Activated T-helper 2 cell treated with anti-CD3 and anti-CD28 coated beads, Interferon-gamma antibody, Interleukin-2, Interleukin-4, amounts not matched to agents 10 μg/mL and 5 μg/mL and 100 μg/mL, durations not matched to agents 14 hours and 24 hours and 36 hours (primary cell): ENCODE measurements at regions of chr16 and their contacts with region 1.

Region 1: DNA sequence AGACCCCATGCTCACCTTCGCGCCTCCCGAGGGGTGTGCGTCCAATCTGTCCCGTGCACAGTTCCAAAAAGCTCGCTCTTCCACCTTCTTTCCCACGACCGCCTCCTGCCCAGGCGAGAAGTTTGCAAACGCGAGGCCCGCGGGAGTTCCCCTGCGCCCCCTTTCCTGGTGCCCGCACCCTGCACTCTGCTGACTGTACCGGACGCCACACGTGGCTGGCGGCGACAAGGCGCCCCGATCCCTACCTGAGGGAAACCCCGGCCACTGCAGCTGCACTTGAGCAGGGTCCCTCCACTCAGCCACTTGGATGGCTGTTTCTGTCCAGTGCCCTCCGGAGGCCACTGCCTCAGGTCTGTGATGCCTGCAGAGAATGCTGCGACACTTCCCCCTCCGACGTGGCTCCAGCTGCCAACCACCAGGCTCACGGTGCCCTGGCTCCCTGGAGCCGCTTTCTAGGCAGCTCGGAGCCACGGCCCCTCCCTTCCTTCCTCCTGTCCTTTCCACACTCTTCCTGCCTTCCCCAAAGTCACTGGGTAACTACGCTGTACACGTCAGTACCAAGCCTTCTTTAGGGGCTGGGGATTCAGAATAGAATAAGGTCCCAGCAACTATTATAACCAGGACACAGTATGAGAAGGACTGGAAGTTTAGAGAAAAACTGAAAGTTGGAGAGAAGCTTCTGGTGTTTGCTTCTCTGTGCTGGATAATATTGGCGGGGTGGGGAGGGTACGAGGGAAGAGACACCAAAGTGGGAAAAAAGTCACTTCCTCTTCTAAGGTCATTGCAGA is at the start of gene MLKL:
- DNase-seq: peak; percentile 37
- H3K4me3 Mint-ChIP-seq: peak within 1 kb of the TSS; percentile 91
- H3K27ac Mint-ChIP-seq: peak within 1 kb of the TSS; percentile 91
- H3K4me1 Mint-ChIP-seq: peaks cover 52% of the 10 kb centered on the region
- H3K27me3 Mint-ChIP-seq: no peaks in the 10 kb centered on the region
- total RNA-seq, gene MLKL: 21.6 and 25.6 TPM in 2 replicates

Region 2: DNA sequence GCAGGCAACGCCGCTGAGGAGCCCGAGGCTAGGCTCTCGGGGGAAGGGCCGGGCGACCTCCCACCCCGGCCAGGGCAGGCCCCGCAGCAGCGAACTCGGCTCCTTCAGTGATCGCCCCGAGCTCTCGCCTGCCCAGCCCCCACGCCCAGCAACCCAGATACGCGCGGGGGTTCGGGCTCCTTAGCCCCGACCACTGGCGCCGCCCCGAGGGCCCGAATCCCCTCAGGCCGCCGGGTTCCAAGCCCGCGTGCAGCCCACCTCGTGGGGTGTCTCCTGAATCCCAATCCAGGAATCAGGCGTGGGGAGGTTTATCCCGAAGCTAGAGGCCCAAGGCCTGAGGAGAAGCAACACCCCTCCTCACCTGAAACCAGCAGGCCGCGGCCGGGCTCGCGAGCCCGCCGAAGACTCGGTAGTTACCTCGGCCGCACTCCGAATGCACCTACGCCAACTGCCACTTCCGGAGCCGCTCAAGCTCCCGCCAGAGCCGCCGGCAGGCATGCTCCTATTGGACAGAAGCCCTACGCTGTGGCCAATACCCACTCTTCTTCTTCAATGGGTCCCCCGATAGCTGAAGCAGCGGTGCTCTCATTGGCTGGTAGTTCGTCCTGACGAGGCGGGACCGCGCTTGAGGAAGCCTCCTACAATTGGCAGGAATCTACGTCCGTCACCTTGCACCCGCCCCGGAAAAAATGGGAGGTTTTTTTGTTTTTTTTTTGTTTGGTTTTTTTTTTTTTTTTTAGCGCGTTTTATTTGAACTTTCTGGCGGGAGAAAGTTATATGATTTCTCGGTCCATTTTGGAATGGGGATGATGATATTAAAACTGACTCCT is 34.0 kb before region 1 on chr16 and contains the start of gene RFWD3:
- intact Hi-C with region 1: loop called (anchors 1 kb)
- DNase-seq: peak; percentile 95
- H3K4me3 Mint-ChIP-seq: peak within 1 kb of the TSS; percentile 91
- H3K27ac Mint-ChIP-seq: peak within 1 kb of the TSS; percentile 86
- H3K4me1 Mint-ChIP-seq: peaks cover 37% of the 10 kb centered on the region
- H3K27me3 Mint-ChIP-seq: no peaks in the 10 kb centered on the region
- total RNA-seq, gene RFWD3: 94.5 and 101 TPM in 2 replicates

Region 3: DNA sequence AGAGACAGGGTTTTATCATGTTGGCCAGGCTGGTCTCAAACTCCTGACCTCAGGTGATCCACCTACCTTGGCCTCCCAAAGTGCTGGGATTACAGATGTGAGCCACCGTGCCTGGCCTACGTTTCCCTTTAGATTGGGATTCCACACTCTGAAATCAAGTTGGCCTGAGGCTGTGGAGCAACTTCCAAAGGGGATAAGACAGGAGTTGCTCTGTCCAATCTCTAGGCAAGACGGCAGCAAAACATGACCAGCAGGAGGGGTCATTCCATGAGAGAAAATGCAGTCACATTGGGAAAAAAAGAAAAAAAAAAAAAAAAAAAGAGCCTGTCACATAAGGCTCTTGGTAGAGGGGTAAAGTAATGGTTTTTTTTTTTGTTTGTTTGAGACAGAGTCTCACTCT is 16.5 kb before region 1 on chr16:
- intact Hi-C with region 1: no loop called
- DNase-seq: no peak
- H3K4me3 Mint-ChIP-seq: no peak overlapping the region
- H3K27ac Mint-ChIP-seq: no peak overlapping the region
- H3K4me1 Mint-ChIP-seq: peaks cover 3% of the 10 kb centered on the region
- H3K27me3 Mint-ChIP-seq: no peaks in the 10 kb centered on the region

Region 4: GRCh38 chr16:74726716-74727115 is 26.1 kb after region 1 on chr16:
- intact Hi-C with region 1: no loop called
- DNase-seq: no peak
- H3K4me3 Mint-ChIP-seq: no peak overlapping the region
- H3K27ac Mint-ChIP-seq: no peak overlapping the region
- H3K4me1 Mint-ChIP-seq: no peaks in the 10 kb centered on the region
- H3K27me3 Mint-ChIP-seq: no peaks in the 10 kb centered on the region

Region 5: DNA sequence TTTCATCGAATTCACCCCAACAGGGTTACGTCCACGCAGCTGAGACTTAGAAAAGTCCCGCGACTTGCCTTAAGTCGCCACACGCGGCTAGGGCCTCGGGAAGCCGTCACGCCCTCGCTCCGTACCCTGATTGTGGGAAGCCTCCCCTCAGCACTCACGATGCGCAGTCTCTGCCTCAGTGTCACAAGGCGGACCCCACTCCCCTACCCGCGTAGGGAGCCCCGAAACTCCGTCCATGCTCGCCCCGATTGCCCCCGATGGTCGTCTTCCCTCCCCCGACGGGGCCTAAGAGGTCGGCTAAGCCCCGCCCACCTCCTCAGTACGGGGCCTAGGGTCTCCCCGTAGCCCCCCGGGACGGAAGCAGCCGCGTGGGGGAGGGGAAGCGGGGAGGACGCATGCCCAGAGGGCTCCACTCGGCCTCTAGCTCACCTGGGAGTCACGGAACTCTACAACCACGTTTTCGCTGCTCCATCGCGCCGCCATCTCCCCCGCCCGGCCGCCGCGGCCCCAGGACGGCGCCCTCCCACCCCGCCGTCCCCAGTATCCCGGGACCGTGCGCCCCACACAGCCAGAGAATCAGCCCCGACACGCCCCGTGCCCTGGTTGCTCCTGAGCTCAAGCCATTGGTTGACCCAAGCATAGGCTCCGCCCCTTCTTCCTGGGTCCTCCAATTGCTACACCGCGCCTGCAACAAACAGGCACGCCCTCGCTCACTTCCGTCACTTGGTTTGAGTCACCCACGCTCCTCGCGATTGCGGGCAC is 284.1 kb after region 1 on chr16 and contains the start of gene WDR59:
- intact Hi-C with region 1: loop called (anchors 2 kb)
- DNase-seq: peak; percentile 99
- H3K4me3 Mint-ChIP-seq: peak within 1 kb of the TSS; percentile 91
- H3K27ac Mint-ChIP-seq: peak within 1 kb of the TSS; percentile 92
- H3K4me1 Mint-ChIP-seq: peaks cover 7% of the 10 kb centered on the region
- H3K27me3 Mint-ChIP-seq: no peaks in the 10 kb centered on the region
- total RNA-seq, gene WDR59: 83.9 and 92.0 TPM in 2 replicates

Region 6: GRCh38 chr16:75148311-75149195 is 447.9 kb after region 1 on chr16 and contains the start of gene ZFP1:
- intact Hi-C with region 1: loop called (anchors 2 kb)
- DNase-seq: peak; percentile 90
- H3K4me3 Mint-ChIP-seq: peak within 1 kb of the TSS; percentile 87
- H3K27ac Mint-ChIP-seq: peak within 1 kb of the TSS; percentile 77
- H3K4me1 Mint-ChIP-seq: peaks cover 14% of the 10 kb centered on the region
- H3K27me3 Mint-ChIP-seq: no peaks in the 10 kb centered on the region
- total RNA-seq, gene ZFP1: 11.2 and 14.0 TPM in 2 replicates

Region 7: DNA sequence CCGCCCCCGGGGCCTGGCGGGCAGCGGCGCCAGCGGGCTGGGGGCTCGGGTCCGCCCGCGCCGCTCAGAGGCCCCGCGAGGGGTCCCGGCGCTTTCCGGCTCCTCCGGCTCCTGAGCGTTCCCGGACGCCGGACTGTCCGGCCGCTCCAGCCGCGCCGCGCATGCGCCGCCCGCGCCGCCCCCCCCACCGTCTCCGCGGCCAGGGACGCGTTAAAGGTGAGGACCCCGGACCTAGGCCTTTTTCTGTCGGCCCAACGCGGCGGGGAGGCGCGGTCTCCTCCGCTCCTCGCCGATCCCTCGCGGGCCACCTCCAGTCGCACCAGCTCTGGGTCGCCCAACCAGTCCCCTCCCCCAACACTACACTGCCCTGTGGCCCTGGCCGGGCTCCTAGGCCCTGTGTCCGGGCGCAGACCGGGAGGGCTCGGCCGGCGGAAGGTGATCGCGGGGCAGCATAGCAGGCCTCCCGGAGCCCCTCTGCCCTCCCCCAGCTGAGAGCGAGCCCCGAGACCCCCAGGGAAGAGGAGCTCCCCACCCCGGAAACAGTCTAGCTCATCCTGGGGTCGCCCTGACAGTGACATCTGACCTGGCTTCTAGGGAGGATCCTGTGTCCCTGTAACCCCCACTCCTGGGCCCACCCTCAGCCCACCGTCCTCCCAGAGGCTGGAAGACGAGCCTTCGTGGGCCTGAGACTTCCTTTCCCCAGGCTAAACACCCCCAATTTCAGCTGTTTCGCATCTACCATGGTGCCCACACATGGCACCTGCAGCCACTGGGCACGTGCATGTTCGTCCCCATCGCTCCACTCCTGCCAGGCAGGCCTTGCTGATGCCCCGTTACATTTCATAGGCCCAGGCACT is 565.4 kb after region 1 on chr16:
- intact Hi-C with region 1: no loop called
- DNase-seq: no peak
- H3K4me3 Mint-ChIP-seq: peak overlapping the region; percentile 49
- H3K27ac Mint-ChIP-seq: no peak overlapping the region
- H3K4me1 Mint-ChIP-seq: no peaks in the 10 kb centered on the region
- H3K27me3 Mint-ChIP-seq: peaks cover 32% of the 10 kb centered on the region

Region 8: DNA sequence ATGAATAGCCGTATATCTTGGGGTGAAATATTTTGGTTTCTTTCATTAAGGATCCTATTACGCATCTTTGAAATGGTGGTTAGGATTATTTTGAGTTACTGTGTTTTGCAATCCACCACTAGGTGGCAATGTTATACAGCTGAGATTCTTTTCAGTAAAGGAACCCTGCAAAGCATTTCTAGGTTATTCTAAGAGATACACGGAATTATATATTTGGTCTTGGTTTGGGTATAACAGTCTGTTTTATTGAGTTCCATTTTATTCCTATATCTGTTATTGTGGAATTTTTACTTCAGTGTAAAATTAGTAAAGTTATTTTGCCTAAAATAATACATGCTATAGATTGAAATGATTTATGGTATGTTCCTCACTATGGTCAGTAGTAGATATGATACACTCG is 1088.6 kb after region 1 on chr16:
- intact Hi-C with region 1: no loop called
- DNase-seq: no peak
- H3K4me3 Mint-ChIP-seq: no peak overlapping the region
- H3K27ac Mint-ChIP-seq: no peak overlapping the region
- H3K4me1 Mint-ChIP-seq: no peaks in the 10 kb centered on the region
- H3K27me3 Mint-ChIP-seq: no peaks in the 10 kb centered on the region